Left lung (tissue), 14 donors: ENCODE measurements at regions of chr7 and their contacts with region 1.

Region 1: GRCh38 chr7:81769891-81770727 is at the start of gene HGF:
- DNase-seq: peak; percentile 52 to 91 (median 76)
- ATAC-seq: peak; percentile 73
- H3K4me3 ChIP-seq: peak within 1 kb of the TSS; percentile 31 to 39
- H3K27ac ChIP-seq: peak within 1 kb of the TSS; percentile 74 to 76
- H3K4me1 ChIP-seq: peaks cover 0 to 50% of the 10 kb centered on the region in 2 donors
- H3K27me3 ChIP-seq: no peaks in the 10 kb centered on the region
- CTCF ChIP-seq: no peak
- polyA plus RNA-seq, gene HGF: 21.0 to 32.4 (median 28.2) TPM

Region 2: DNA sequence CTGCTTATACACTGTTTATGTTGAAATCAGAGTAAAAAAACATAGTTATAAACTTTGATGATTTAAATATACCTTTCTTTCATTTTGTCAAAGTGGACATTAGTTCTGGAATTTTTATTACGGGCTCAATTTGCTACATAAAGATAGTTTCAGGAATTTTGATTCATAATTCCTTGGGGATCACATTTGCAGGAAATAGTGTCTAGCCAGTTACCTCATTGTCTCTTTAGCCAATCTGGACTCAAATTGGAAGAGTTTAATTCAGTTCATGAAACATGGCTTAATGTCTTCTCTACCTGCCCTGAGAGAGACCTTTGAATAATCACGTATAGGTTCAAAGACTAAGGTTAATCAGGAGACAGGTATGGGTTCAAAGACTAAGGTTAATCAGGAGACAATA is 262.9 kb before region 1 on chr7:
- intact Hi-C with region 1: loop called in 1 of 2 experiments (anchors 5 kb)
- DNase-seq: no peak
- ATAC-seq: no peak
- H3K4me3 ChIP-seq: no peak overlapping the region
- H3K27ac ChIP-seq: no peak overlapping the region
- H3K4me1 ChIP-seq: no peaks in the 10 kb centered on the region
- H3K27me3 ChIP-seq: no peaks in the 10 kb centered on the region
- CTCF ChIP-seq: no peak

Region 3: GRCh38 chr7:81676813-81677212 is 93.3 kb before region 1 on chr7:
- intact Hi-C with region 1: no loop called
- DNase-seq: no peak
- ATAC-seq: no peak
- H3K4me3 ChIP-seq: no peak overlapping the region
- H3K27ac ChIP-seq: no peak overlapping the region
- H3K4me1 ChIP-seq: no peaks in the 10 kb centered on the region
- H3K27me3 ChIP-seq: no peaks in the 10 kb centered on the region
- CTCF ChIP-seq: no peak